ENCODE measurements at regions of chr7 and their contacts with region 1.

Region 1: DNA sequence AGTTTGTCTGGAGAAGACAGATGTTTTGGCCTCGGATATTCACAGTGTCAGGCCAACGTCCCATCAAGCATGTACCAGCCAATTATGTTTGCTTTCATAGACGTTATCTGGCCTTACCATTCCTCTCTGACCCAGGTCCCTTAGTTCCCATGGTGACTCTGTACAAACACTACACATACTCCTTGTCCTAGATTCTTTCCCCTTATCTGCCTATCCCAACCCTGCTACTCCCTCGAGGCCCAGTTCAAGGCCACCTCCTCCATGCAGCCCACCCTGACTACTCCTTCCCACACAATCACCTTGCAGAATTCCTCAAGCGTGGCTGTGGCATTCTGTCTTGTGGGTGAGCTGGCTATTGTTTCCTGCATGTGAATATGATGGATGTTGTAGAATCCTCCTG is 155.2 kb downstream of the PRKAG2 start:
- DNase-seq: peak; percentile 11
- ATAC-seq: peak; percentile 62

Region 2: GRCh38 chr7:151408839-151409666 is 312.6 kb before region 1 on chr7:
- intact Hi-C with region 1: no loop called
- DNase-seq: no peak
- ATAC-seq: no peak

Region 3: GRCh38 chr7:151744656-151745638 is 23.3 kb after region 1 on chr7:
- intact Hi-C with region 1: loop called (anchors 2 kb)
- DNase-seq: peak; percentile 87
- ATAC-seq: peak; percentile 88

Region 4: DNA sequence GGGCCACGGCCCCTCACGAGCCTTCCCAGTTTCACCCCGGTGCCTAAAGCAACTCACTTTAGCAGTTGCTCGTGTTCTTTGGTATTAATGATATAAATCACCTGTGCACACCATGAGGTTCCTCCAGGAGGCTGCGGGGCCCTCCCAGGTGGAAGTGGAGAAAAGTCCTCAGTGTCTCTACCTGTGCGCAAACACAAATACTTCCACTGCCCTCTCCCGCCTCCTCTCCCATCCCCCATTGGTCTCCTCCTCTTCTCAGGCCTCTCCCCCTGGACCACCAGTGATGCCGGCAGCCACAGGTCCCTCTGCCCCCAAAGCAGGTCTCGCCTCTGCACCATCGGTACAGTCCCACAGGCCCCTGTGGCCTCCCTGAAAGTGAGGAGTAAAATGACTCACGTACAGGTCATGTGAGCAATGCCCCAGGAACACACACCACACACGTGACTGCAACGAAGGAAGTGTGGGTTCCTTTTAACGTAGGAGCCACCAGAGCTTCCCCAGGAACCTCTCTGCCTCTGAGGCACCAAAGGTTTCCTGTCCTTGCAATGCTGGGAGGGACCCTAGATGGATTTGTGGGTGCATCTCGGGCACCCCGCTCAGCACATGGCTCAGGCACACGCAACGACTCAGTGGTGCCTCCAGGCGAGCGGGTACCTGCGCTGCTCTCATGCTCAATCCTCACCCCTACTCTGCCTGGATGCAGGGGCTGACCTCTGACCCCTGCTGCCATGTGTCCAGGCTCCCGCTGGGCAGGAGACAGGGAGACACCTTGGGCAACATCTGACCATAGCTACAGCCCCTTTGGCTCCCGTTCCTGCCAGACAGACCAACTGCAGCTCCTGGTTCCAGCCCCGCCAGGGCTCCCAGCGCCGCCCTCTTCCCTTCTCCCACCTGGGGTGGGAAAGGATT is 34.4 kb after region 1 on chr7:
- intact Hi-C with region 1: no loop called
- DNase-seq: no peak
- ATAC-seq: no peak

Measured in Right ventricle myocardium inferior (tissue), 1 donor.